Activated CD4-positive, alpha-beta T cell treated with anti-CD3 and anti-CD28 coated beads for 36 hours (primary cell): ENCODE measurements at regions of chr1 and their contacts with region 1.

Region 1: DNA sequence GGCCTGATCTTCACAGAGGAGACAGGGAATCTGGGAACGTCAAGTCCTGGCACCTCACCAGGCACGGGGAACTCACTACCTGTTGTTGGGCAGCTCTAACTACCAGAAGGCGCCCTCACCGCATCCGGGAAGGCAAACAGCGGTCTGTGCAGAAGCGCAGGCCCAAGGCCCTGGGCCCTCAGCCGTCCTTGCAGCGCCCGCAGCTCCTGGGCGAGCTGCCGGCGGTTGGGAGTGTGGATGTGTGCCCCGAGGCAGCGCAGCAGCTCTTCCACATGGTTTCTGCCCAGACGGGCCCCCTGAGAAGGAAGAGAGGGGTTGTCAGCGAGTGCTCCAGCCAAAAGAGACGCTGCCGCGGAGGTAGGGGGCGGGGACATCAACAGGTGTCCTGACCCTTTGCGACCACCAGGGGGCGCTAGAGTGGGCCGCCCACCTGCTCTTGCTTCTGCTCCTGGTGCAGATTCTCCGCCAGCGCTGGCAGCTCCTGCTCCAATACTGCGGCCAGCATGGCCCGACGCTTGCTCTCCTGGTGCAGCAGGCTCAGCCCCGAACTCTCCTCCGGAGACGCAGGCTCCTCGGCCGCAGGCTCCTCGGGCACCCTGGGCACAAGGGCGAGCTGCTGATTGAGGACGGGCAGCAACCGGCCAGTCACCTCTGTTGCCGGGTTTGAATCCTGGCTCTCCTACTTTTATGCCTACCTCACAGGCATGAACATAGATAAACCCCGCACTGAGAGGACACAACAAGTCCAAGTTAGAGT is 9.3 kb downstream of the MAP3K6 start:
- DNase-seq: peak; percentile 91
- ATAC-seq: peak; percentile 78
- H3K4me3 Mint-ChIP-seq: peak overlapping the region; percentile 64
- H3K27ac Mint-ChIP-seq: peak overlapping the region; percentile 73
- H3K4me1 Mint-ChIP-seq: peaks cover 40% of the 10 kb centered on the region
- H3K27me3 Mint-ChIP-seq: no peaks in the 10 kb centered on the region

Region 2: GRCh38 chr1:27341525-27342252 is 15.8 kb before region 1 on chr1 and contains the start of gene SYTL1:
- CTCF ChIA-PET with region 1: interaction called, 23 read pairs
- POLR2A ChIA-PET with region 1: interaction called, 3 read pairs
- intact Hi-C with region 1: loop called in 1 of 2 experiments (anchors 1 kb)
- DNase-seq: peak; percentile 83
- ATAC-seq: peak; percentile 63
- H3K4me3 Mint-ChIP-seq: peak within 1 kb of the TSS; percentile 78
- H3K27ac Mint-ChIP-seq: peak within 1 kb of the TSS; percentile 86
- H3K4me1 Mint-ChIP-seq: peaks cover 51% of the 10 kb centered on the region
- H3K27me3 Mint-ChIP-seq: no peaks in the 10 kb centered on the region
- total RNA-seq, gene SYTL1: 21.4 to 26.1 TPM

Region 3: GRCh38 chr1:27383039-27383605 is 25.7 kb after region 1 on chr1 and contains the start of gene CD164L2:
- CTCF ChIA-PET with region 1: interaction called, 19 read pairs
- POLR2A ChIA-PET with region 1: no interaction called
- intact Hi-C with region 1: loop called in 1 of 2 experiments (anchors 1 kb)
- DNase-seq: peak; percentile 70
- ATAC-seq: peak; percentile 79
- H3K4me3 Mint-ChIP-seq: no peak within 1 kb of the TSS
- H3K27ac Mint-ChIP-seq: no peak within 1 kb of the TSS
- H3K4me1 Mint-ChIP-seq: no peaks in the 10 kb centered on the region
- H3K27me3 Mint-ChIP-seq: no peaks in the 10 kb centered on the region
- total RNA-seq, gene CD164L2: not detected

Region 4: DNA sequence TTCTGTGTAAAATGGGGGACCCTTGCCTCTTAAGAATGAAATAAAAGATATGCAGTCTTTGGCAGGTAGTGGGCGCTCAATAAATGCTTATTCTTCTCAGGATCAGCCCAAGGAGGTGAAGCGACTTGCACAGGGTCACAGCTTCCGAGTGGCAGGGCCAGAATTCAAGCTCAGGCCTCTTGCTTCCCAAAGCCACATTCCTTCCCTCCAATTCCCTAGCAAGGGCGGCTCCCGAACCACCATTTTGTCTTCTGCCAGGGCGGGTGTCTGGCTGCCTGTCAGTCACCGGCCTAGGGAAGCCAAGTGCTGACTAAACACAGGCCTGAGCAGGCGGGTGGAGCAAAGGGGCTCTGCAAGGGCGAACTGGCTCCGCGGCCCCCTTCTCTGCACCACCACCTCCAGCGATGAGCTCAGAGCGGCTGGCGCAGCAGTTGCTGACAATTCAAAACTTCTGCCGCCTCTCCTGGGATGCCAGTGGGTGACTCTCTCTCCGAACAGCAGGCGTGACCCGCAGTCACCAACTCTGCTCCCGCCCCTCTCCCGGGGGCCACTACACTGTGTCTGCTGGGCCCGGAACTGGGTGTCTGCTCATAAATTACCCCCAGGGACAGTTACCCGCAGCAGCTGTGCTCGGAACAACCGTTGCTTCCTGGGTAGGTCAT is 45.7 kb after region 1 on chr1:
- CTCF ChIA-PET with region 1: no interaction called
- POLR2A ChIA-PET with region 1: no interaction called
- intact Hi-C with region 1: no loop called
- DNase-seq: peak; percentile 66
- ATAC-seq: peak; percentile 69
- H3K4me3 Mint-ChIP-seq: no peak overlapping the region
- H3K27ac Mint-ChIP-seq: peak overlapping the region; percentile 33
- H3K4me1 Mint-ChIP-seq: peaks cover 15% of the 10 kb centered on the region
- H3K27me3 Mint-ChIP-seq: no peaks in the 10 kb centered on the region

Region 5: GRCh38 chr1:27616441-27616840 is 259.0 kb after region 1 on chr1:
- CTCF ChIA-PET with region 1: no interaction called
- POLR2A ChIA-PET with region 1: no interaction called
- intact Hi-C with region 1: no loop called
- DNase-seq: no peak
- ATAC-seq: no peak
- H3K4me3 Mint-ChIP-seq: no peak overlapping the region
- H3K27ac Mint-ChIP-seq: no peak overlapping the region
- H3K4me1 Mint-ChIP-seq: peaks cover 47% of the 10 kb centered on the region
- H3K27me3 Mint-ChIP-seq: no peaks in the 10 kb centered on the region